ENCODE measurements at regions of chr4 and their contacts with region 1.

Region 1: GRCh38 chr4:140049024-140049848 is 104.7 kb downstream of the MAML3 start:
- DNase-seq: peak in 1 of 2 donors; percentile 17
- ATAC-seq: peak; percentile 39 to 40
- H3K4me3 ChIP-seq: peak overlapping the region; percentile 35 to 46 (median 44)
- H3K27ac ChIP-seq: peak overlapping the region; percentile 21 to 71 (median 50)
- H3K4me1 ChIP-seq: peaks cover 24 to 26% of the 10 kb centered on the region in 2 donors
- H3K27me3 ChIP-seq: no peaks in the 10 kb centered on the region
- CTCF ChIP-seq: no peak
- POLR2A ChIP-seq: no peak

Region 2: DNA sequence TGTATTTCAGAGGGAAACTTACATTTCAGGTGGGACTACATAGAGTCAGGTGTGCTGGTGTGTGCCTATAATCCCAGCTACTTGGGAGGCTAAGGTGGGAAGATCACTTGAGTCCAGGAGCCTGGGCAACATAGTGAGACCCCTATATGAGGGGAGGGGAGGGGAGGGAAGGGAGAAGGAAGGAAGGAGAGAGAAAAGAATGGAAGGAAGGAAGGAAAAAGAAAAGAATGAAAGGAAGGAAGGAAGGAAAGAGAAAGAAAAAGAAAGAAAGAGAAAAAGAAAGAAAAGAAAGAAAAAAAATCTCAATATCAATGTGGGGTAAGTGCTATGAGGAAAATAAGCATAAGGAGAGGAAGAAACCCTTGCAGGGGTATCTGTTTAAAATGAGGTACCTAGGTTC is 638.9 kb before region 1 on chr4:
- in situ Hi-C with region 1: no loop called
- intact Hi-C with region 1: no loop called
- DNase-seq: no peak
- ATAC-seq: no peak
- H3K4me3 ChIP-seq: no peak overlapping the region
- H3K27ac ChIP-seq: no peak overlapping the region
- H3K4me1 ChIP-seq: peaks cover 0 to 7% of the 10 kb centered on the region in 2 donors
- H3K27me3 ChIP-seq: no peaks in the 10 kb centered on the region
- CTCF ChIP-seq: no peak
- POLR2A ChIP-seq: no peak

Region 3: DNA sequence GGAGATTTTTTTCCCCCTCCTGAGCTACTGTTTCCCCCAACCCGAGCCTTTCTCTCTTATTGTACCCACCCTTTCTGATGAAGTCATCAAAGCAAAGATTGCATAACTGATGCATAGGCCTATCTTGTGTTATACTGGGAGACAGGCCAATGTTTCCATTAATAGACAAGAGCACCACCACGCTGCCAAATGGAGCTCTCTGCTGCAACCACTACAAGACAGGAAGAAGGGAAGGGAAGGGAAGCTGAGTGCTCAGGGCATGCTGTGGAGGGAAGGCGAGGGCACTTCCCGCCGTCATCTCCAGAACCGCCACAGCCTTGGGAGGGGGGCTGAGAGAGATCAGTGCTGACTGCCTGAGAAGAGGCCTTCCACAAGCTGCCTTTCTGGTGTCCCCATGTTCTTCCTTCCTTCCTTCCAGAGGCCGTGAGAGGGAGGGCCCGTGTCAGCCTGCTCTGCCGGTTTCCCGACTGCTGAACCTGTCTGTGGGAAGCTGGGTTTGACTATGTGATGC is 308.6 kb before region 1 on chr4:
- in situ Hi-C with region 1: loop called in 1 of 4 experiments (anchors 10 kb)
- intact Hi-C with region 1: loop called (anchors 2 kb)
- DNase-seq: peak; percentile 76 to 88
- ATAC-seq: peak; percentile 96 to 98
- H3K4me3 ChIP-seq: peak overlapping the region; percentile 10 to 50 (median 44)
- H3K27ac ChIP-seq: peak overlapping the region; percentile 80 to 97 (median 92)
- H3K4me1 ChIP-seq: peaks cover 26 to 30% of the 10 kb centered on the region in 2 donors
- H3K27me3 ChIP-seq: no peaks in the 10 kb centered on the region
- CTCF ChIP-seq: peak in 4 of 5 experiments; percentile 2 to 44 (median 30)
- POLR2A ChIP-seq: no peak

Region 4: DNA sequence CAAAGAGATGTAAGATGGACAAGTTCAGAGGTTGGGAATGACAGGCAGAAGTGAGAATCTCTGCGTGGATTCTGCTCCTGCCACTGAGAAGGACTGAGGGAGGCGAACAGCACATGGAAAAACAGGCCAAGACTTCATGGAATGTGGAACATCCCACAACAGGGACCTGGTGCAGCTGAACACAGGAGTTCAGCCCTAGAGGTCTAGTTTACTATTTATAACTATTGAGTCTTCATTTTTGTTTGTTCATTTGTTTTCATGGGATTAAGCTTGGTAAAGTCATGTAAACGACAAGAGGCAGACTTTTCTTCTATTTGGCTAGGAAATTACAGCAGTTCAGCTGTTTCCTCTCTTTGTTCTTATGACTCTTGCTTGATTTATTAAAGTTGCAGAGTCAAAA is 129.7 kb before region 1 on chr4:
- in situ Hi-C with region 1: no loop called
- intact Hi-C with region 1: loop called (anchors 10 kb)
- DNase-seq: no peak
- ATAC-seq: peak; percentile 34 to 45
- H3K4me3 ChIP-seq: no peak overlapping the region
- H3K27ac ChIP-seq: peak overlapping the region; percentile 45 to 68 (median 54)
- H3K4me1 ChIP-seq: peaks cover 45 to 48% of the 10 kb centered on the region in 2 donors
- H3K27me3 ChIP-seq: no peaks in the 10 kb centered on the region
- CTCF ChIP-seq: no peak
- POLR2A ChIP-seq: no peak

Region 5: GRCh38 chr4:140004549-140004895 is 44.7 kb before region 1 on chr4:
- in situ Hi-C with region 1: no loop called
- intact Hi-C with region 1: loop called (anchors 5 kb)
- DNase-seq: peak; percentile 46 to 66
- ATAC-seq: peak; percentile 81 to 90
- H3K4me3 ChIP-seq: peak overlapping the region; percentile 41 to 52 (median 51)
- H3K27ac ChIP-seq: peak overlapping the region in 3 of 4 donors; percentile 15 to 77 (median 60)
- H3K4me1 ChIP-seq: peaks cover 18 to 23% of the 10 kb centered on the region in 2 donors
- H3K27me3 ChIP-seq: no peaks in the 10 kb centered on the region
- CTCF ChIP-seq: no peak
- POLR2A ChIP-seq: no peak

Region 6: DNA sequence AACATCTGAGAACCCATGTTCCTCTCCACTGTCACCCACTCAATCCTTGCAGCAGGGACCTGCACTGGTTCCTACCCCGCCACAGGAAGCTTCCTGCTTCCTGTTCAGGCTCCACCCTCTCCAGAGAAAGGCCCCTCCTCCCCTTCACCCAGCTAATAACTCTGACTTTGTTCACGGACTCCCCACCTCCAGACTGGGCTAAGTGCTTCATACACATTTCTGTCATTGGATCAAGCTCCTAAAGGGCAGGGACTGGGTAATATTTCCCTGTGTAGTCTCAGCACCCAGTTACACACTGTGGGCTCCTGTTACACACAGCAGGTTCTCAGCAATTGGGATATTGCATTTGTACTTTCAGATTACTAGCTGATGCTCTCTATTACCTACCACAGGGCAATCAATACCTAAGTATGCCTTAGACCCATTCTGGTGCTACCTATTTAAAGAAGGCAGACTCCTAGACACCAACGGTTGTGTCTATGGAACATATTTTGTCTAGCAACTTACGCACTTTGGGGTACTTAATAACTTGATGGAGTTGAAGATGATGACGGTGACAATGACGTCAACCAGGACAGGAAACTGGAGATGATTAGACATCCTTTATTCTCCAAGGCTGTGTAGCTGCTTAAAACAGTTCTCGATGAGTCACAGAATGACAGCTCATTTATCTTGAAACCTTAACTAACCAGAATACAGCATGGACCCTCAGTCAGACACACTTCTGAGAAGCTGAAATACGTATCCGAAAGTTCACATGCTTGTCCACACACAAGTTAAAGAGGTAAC is 46.7 kb after region 1 on chr4:
- in situ Hi-C with region 1: no loop called
- intact Hi-C with region 1: loop called (anchors 5 kb)
- DNase-seq: peak in 1 of 2 donors; percentile 31
- ATAC-seq: peak; percentile 2 to 21
- H3K4me3 ChIP-seq: peak overlapping the region in 1 of 4 donors; percentile 6
- H3K27ac ChIP-seq: peak overlapping the region; percentile 75 to 81 (median 76)
- H3K4me1 ChIP-seq: peaks cover 56 to 78% of the 10 kb centered on the region in 2 donors
- H3K27me3 ChIP-seq: no peaks in the 10 kb centered on the region
- CTCF ChIP-seq: no peak
- POLR2A ChIP-seq: peak in 1 of 2 donors; percentile 11

Measured in gastrocnemius medialis (tissue), 4 donors.